ENCODE measurements at regions of chr3 and their contacts with region 1.

Region 1: GRCh38 chr3:138915503-138916498 is 31.1 kb downstream of the FOXL2 start:
- DNase-seq: peak; percentile 98
- ATAC-seq: peak; percentile 97

Region 2: GRCh38 chr3:138594935-138595610 is 320.7 kb before region 1 on chr3:
- intact Hi-C with region 1: loop called (anchors 5 kb)
- DNase-seq: no peak
- ATAC-seq: no peak

Region 3: GRCh38 chr3:138696666-138697370 is 219.0 kb before region 1 on chr3:
- intact Hi-C with region 1: loop called (anchors 5 kb)
- DNase-seq: no peak
- ATAC-seq: no peak

Region 4: DNA sequence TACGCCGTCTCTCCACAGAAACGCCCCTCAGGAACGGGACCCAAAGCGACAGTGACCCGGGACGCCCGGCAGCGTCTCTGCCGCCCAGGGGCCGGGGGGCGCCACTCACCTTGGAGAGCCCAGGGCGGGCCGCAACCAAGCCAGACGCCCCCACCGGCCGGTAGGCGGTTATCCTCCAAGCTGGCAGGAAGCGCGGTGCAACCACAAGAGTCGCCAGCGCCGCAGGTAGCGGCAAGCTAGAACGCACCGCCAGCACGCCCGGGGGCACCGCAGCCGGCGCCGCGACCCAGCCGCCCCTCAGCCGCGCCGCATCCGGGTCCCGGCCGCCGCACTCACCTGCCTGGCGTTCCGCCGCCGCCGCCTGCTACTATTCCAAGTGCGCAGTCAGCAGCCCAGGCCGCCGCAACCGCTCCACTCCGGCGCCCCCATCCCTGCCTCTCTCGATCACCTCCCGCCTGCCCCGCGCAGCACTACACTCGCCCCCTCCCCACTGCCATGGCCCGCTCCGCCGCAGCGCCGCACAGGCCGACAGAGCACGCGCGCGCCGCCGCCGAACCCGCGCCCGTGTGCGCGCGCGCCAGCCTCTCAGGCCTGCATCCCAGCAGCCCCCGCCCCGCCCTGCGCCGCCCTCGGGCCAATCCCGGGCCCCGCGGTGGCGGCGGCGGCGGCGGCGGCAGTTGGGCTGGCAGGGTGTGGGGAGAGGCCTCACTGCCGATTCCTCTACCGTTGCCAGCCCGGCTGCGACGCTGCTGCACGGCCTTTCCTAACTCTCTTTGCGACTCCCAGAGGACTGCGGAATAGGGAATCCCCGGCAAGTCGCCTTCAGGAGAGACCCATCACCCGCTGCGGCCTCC is 81.2 kb before region 1 on chr3 and contains the start of gene PIK3CB:
- intact Hi-C with region 1: loop called (anchors 10 kb)
- DNase-seq: peak; percentile 97
- ATAC-seq: peak; percentile 99
- total RNA-seq, gene PIK3CB: 33.3 TPM